Vagina (tissue), 2 donors: ENCODE measurements at regions of chr6 and their contacts with region 1.

Region 1: GRCh38 chr6:47455534-47456209 is 21.9 kb upstream of the CD2AP start:
- DNase-seq: no peak
- H3K4me3 ChIP-seq: no peak overlapping the region
- H3K27ac ChIP-seq: no peak overlapping the region
- H3K4me1 ChIP-seq: no peaks in the 10 kb centered on the region
- H3K27me3 ChIP-seq: no peaks in the 10 kb centered on the region
- CTCF ChIP-seq: no peak
- POLR2A ChIP-seq: no peak

Region 2: GRCh38 chr6:45527210-45527609 is 1928.5 kb before region 1 on chr6:
- intact Hi-C with region 1: loop called (anchors 5 kb)
- DNase-seq: no peak
- H3K4me3 ChIP-seq: no peak overlapping the region
- H3K27ac ChIP-seq: no peak overlapping the region
- H3K4me1 ChIP-seq: no peaks in the 10 kb centered on the region
- H3K27me3 ChIP-seq: no peaks in the 10 kb centered on the region
- CTCF ChIP-seq: no peak
- POLR2A ChIP-seq: no peak

Region 3: GRCh38 chr6:47344022-47344421 is 111.7 kb before region 1 on chr6:
- intact Hi-C with region 1: no loop called
- DNase-seq: no peak
- H3K4me3 ChIP-seq: no peak overlapping the region
- H3K27ac ChIP-seq: no peak overlapping the region
- H3K4me1 ChIP-seq: no peaks in the 10 kb centered on the region
- H3K27me3 ChIP-seq: no peaks in the 10 kb centered on the region
- CTCF ChIP-seq: no peak
- POLR2A ChIP-seq: no peak